ENCODE measurements at regions of chr11 and their contacts with region 1.

Region 1: GRCh38 chr11:13668102-13668956 is at the start of gene FAR1:
- DNase-seq: peak; percentile 98 to 99 (median 99)
- H3K4me3 ChIP-seq: peak within 1 kb of the TSS; percentile 87 to 95 (median 94)
- H3K4me3 Mint-ChIP-seq: peak within 1 kb of the TSS; percentile 99
- H3K27ac ChIP-seq: peak within 1 kb of the TSS; percentile 81 to 88
- H3K27ac Mint-ChIP-seq: peak within 1 kb of the TSS; percentile 94 to 98 (median 96)
- H3K4me1 ChIP-seq: peaks cover 39 to 54% of the 10 kb centered on the region in 2 donors
- H3K4me1 Mint-ChIP-seq: peaks cover 50% of the 10 kb centered on the region
- H3K27me3 ChIP-seq: no peaks in the 10 kb centered on the region
- H3K27me3 Mint-ChIP-seq: peaks cover 2 to 8% (median 5%) of the 10 kb centered on the region in 3 donors
- CTCF ChIP-seq: peak; percentile 78
- polyA plus RNA-seq, gene FAR1: 47.2 to 77.0 (median 52.6) TPM

Region 2: GRCh38 chr11:13276832-13277767 is 391.2 kb before region 1 on chr11:
- intact Hi-C with region 1: loop called in 1 of 2 experiments (anchors 2 kb)
- DNase-seq: peak; percentile 95 to 98 (median 97)
- H3K4me3 ChIP-seq: peak overlapping the region; percentile 62 to 85 (median 80)
- H3K4me3 Mint-ChIP-seq: peak overlapping the region; percentile 98 to 99
- H3K27ac ChIP-seq: peak overlapping the region in 1 of 2 donors; percentile 86
- H3K27ac Mint-ChIP-seq: peak overlapping the region; percentile 31 to 85 (median 68)
- H3K4me1 ChIP-seq: peaks cover 28 to 41% of the 10 kb centered on the region in 2 donors
- H3K4me1 Mint-ChIP-seq: peaks cover 44% of the 10 kb centered on the region
- H3K27me3 ChIP-seq: peaks cover 33 to 53% of the 10 kb centered on the region in 2 donors
- H3K27me3 Mint-ChIP-seq: peaks cover 56 to 68% (median 64%) of the 10 kb centered on the region in 3 donors
- CTCF ChIP-seq: no peak

Region 3: GRCh38 chr11:13462901-13463778 is 205.2 kb before region 1 on chr11 and contains the start of gene BTBD10:
- intact Hi-C with region 1: loop called in 1 of 2 experiments (anchors 5 kb)
- DNase-seq: peak; percentile 93 to 96 (median 94)
- H3K4me3 ChIP-seq: peak within 1 kb of the TSS; percentile 82 to 93 (median 90)
- H3K4me3 Mint-ChIP-seq: peak within 1 kb of the TSS; percentile 97 to 99
- H3K27ac ChIP-seq: peak within 1 kb of the TSS; percentile 76 to 87
- H3K27ac Mint-ChIP-seq: peak within 1 kb of the TSS; percentile 91 to 98 (median 96)
- H3K4me1 ChIP-seq: peaks cover 22 to 29% of the 10 kb centered on the region in 2 donors
- H3K4me1 Mint-ChIP-seq: peaks cover 37% of the 10 kb centered on the region
- H3K27me3 ChIP-seq: no peaks in the 10 kb centered on the region
- H3K27me3 Mint-ChIP-seq: peaks cover 0 to 2% (median under 1%) of the 10 kb centered on the region in 3 donors
- CTCF ChIP-seq: no peak
- polyA plus RNA-seq, gene BTBD10: 9.6 to 19.8 (median 13.8) TPM

Region 4: DNA sequence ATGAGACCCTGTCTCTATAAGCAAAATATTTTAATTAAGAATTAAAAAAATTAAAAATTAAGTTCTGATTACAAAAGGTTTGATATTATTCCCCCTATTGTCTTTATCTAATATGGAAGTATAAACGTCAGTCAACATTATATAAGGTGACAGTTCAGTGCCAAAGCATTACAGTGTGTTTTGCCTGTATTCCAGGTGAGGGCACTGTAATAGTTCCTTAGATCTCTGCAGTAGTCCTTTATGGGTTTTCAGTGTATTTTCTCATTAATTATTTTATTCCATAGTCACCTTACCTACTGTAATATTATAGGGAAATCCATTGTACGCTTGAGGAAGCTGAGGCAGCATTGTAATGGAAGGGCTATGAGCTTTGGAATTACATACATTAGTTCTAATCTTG is 33.2 kb after region 1 on chr11:
- intact Hi-C with region 1: loop called in 1 of 2 experiments (anchors 5 kb)
- DNase-seq: no peak
- H3K4me3 ChIP-seq: no peak overlapping the region
- H3K4me3 Mint-ChIP-seq: no peak overlapping the region
- H3K27ac ChIP-seq: no peak overlapping the region
- H3K27ac Mint-ChIP-seq: no peak overlapping the region
- H3K4me1 ChIP-seq: no peaks in the 10 kb centered on the region
- H3K4me1 Mint-ChIP-seq: peaks cover 2% of the 10 kb centered on the region
- H3K27me3 ChIP-seq: no peaks in the 10 kb centered on the region
- H3K27me3 Mint-ChIP-seq: peaks cover 0 to 4% (median 0%) of the 10 kb centered on the region in 3 donors
- CTCF ChIP-seq: no peak

Measured in CD14-positive monocyte (primary cell).